ENCODE measurements at regions of chr22 and their contacts with region 1.

Region 1: DNA sequence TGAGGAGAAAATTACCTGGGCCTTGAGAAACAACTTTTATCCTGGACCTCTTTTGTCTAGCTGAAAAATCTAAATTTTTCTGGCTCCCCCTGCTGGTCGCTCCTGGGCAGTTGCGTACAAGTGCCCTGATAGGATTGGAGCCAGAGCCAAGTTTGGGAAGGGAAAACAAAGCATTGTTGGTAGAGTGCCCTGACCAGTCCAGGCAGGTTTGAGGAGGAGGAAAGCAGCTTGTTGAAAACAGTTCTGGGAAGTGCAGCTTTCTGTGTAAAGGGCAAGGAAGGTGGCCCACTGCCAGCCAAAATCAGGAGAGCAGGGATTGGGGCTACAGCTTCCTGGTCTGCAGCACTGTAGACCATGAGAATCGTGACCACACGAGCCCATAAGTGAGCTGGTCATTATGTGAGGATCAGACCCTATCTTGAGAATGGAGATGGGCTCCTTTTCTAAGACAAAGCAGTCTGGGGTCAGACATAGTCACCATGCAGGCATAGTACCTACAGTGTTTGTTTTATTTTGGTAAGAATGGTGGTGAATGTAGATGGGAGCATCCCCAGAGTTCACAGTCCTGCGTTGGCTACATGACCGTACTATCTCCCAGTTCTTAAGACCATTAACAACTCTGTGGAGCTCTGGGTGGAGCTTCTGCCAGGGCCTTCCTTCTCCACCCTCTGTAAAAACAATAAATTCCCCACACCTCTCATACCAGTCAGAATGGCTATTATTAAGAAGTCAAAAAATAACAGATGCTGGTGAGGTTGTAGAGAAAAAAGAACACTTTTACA is 21.3 kb upstream of the PIK3IP1 start:
- DNase-seq: peak; percentile 21 to 39
- ATAC-seq: peak; percentile 81 to 88
- H3K4me3 ChIP-seq: no peak overlapping the region
- H3K27ac ChIP-seq: no peak overlapping the region
- H3K4me1 ChIP-seq: no peaks in the 10 kb centered on the region
- CTCF ChIP-seq: peak; percentile 61
- EP300 ChIP-seq: no peak
- POLR2A ChIP-seq: no peak
- RAD21 ChIP-seq: peak; percentile 31; a peak in 2 of 5 replicates

Region 2: DNA sequence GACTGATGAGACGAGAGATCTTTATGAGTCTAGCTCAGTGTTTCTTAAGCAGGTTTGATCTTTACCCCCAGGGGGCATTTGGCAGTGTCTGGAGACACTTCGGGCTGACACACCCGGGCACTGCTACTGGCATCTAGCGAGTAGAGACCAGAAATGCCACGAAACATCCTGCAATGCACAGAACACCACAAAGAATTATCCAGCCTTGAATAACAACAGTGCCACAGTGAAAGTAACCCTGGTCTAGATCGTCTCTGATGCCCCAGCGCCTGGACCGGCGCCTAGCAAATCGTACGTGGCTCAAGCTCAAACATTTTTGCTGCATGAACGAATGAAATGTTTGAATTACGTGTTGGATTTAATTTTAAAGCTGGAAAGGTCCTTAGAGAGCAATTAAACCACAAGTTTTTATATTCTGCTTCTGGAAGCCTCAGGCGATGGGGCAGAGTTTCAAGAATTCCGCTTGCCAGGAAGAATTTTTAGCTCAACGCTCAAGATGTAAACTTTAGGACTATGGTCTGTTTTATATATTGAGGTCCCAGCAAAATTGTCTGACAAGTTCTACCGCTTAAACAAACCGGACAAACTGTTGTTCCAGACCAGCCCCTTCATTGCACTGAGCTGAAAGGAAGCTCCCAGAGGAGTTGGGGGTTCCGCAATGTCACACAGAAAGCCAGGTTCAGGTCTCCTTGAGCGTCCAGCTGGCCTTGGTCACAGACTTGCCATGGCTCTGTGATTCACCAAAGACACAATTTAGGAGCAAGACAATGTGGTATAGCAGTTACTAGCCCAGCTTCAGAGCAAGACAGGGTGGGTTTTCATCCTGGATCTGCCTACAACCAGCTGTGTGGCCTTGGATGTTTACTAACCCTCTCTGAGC is 276.6 kb before region 1 on chr22:
- CTCF ChIA-PET with region 1: no interaction called
- POLR2A ChIA-PET with region 1: no interaction called
- DNase-seq: peak in 1 of 2 experiments; percentile 60
- ATAC-seq: peak; percentile 82 to 85
- H3K4me3 ChIP-seq: no peak overlapping the region
- H3K27ac ChIP-seq: peak overlapping the region; percentile 17 to 36; a peak in 2 of 6 replicates
- H3K4me1 ChIP-seq: peaks cover 11% of the 10 kb centered on the region; the same call in 1 of the 3 replicates
- CTCF ChIP-seq: 0 out of 3 replicates have a peak, but pooled peaks have one; percentile 9
- EP300 ChIP-seq: no peak
- POLR2A ChIP-seq: no peak
- RAD21 ChIP-seq: peak; percentile 27 to 29; a peak in 2 of 5 replicates

Region 3: GRCh38 chr22:31179356-31179755 is 134.2 kb before region 1 on chr22:
- CTCF ChIA-PET with region 1: no interaction called
- POLR2A ChIA-PET with region 1: no interaction called
- DNase-seq: peak in 1 of 2 experiments; percentile 60
- ATAC-seq: peak; percentile 64 to 74; a peak in 5 of 6 replicates
- H3K4me3 ChIP-seq: no peak overlapping the region
- H3K27ac ChIP-seq: peak overlapping the region; percentile 55; a peak in 3 of 6 replicates
- H3K4me1 ChIP-seq: peaks cover 24% of the 10 kb centered on the region
- CTCF ChIP-seq: no peak
- EP300 ChIP-seq: no peak
- POLR2A ChIP-seq: no peak
- RAD21 ChIP-seq: no peak

Region 4: GRCh38 chr22:31290494-31291471 is 22.8 kb before region 1 on chr22:
- CTCF ChIA-PET with region 1: interaction called, 12 read pairs
- POLR2A ChIA-PET with region 1: no interaction called
- DNase-seq: peak; percentile 78 to 89
- ATAC-seq: peak; percentile 95 to 97
- H3K4me3 ChIP-seq: peak overlapping the region; percentile 50
- H3K27ac ChIP-seq: peak overlapping the region; percentile 59 to 84; a peak in 5 of 6 replicates
- H3K4me1 ChIP-seq: peaks cover 20% of the 10 kb centered on the region
- CTCF ChIP-seq: no peak
- EP300 ChIP-seq: no peak
- POLR2A ChIP-seq: no peak
- RAD21 ChIP-seq: no peak

Region 5: DNA sequence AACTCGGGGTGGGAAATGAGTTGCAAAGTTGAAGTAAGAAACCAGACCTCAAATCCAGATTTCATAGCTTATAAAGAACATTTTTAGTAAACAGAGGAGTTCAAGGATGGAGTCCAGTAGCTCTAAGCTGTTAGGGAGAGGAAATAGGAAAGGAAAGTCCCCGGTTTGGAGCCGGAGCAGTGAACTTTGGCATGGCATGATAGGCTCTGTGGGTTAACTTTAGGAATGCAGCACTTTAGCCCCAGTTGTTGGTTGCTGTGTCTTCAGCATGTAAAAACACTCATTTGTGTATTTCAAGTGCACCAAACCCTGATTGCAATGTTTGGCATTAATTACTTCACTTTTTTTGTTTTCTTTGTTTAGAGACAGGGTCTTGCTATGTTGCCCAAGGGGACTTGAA is 12.7 kb before region 1 on chr22:
- CTCF ChIA-PET with region 1: interaction called, 15 read pairs
- POLR2A ChIA-PET with region 1: no interaction called
- DNase-seq: no peak
- ATAC-seq: no peak
- H3K4me3 ChIP-seq: no peak overlapping the region
- H3K27ac ChIP-seq: no peak overlapping the region
- H3K4me1 ChIP-seq: peaks cover 5% of the 10 kb centered on the region; the same call in 2 of the 3 replicates
- CTCF ChIP-seq: no peak
- EP300 ChIP-seq: no peak
- POLR2A ChIP-seq: no peak
- RAD21 ChIP-seq: no peak

Region 6: GRCh38 chr22:31327883-31328696 is 14.5 kb after region 1 on chr22:
- CTCF ChIA-PET with region 1: interaction called, 43 read pairs
- POLR2A ChIA-PET with region 1: no interaction called
- DNase-seq: no peak
- ATAC-seq: no peak; a peak in 1 of 6 replicates
- H3K4me3 ChIP-seq: no peak overlapping the region
- H3K27ac ChIP-seq: no peak overlapping the region
- H3K4me1 ChIP-seq: no peaks in the 10 kb centered on the region
- CTCF ChIP-seq: no peak
- EP300 ChIP-seq: no peak
- POLR2A ChIP-seq: no peak
- RAD21 ChIP-seq: no peak

Region 7: DNA sequence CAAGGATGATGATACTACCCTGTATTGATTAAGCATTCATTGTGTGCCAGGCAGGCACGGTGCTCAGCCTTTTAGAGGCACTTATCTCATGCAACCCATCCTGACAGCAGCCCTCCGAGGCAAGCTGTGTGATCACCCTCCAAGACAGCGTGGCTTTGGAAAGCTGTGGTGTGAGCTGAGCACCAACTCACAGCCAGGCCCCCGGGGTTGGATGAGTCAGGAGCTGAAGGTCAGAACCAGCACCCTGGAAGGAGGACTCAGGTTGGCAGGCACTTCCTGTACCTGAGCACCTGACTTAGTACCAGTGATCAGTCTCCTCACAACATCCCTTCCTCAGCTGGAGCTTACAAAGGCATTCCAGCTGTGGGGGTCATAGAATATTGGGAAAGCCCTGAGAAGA is 23.6 kb after region 1 on chr22:
- CTCF ChIA-PET with region 1: interaction called, 13 read pairs
- POLR2A ChIA-PET with region 1: no interaction called
- DNase-seq: no peak
- ATAC-seq: no peak
- H3K4me3 ChIP-seq: no peak overlapping the region
- H3K27ac ChIP-seq: no peak overlapping the region
- H3K4me1 ChIP-seq: no peaks in the 10 kb centered on the region; the same call in 2 of the 3 replicates
- CTCF ChIP-seq: no peak
- EP300 ChIP-seq: no peak
- POLR2A ChIP-seq: no peak
- RAD21 ChIP-seq: no peak

Region 8: DNA sequence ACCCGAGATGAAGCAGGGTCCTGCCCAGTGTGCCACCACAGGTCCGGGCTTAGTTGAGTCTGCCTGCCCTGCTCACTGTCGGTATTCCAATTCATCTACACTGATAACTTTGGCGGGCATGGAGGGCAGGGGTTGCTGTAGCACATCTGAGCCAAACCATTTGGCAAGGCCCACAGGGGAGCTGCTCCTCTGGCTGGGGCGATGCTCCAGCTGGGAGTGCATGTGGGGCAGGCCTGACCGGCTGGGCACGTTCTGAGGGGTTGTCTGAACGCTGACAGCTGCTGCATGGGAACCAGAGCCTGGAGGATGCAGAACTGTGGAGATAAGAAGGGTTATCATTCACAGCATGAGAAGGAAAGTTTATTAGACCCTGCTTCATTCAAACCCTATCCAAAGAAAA is 126.3 kb after region 1 on chr22:
- CTCF ChIA-PET with region 1: no interaction called
- POLR2A ChIA-PET with region 1: no interaction called
- DNase-seq: no peak
- ATAC-seq: no peak
- H3K4me3 ChIP-seq: no peak overlapping the region
- H3K27ac ChIP-seq: no peak overlapping the region
- H3K4me1 ChIP-seq: no peaks in the 10 kb centered on the region
- CTCF ChIP-seq: no peak
- EP300 ChIP-seq: no peak
- POLR2A ChIP-seq: no peak
- RAD21 ChIP-seq: no peak